Caco-2 (cell line): ENCODE measurements at regions of chrX and their contacts with region 1.

Region 1: DNA sequence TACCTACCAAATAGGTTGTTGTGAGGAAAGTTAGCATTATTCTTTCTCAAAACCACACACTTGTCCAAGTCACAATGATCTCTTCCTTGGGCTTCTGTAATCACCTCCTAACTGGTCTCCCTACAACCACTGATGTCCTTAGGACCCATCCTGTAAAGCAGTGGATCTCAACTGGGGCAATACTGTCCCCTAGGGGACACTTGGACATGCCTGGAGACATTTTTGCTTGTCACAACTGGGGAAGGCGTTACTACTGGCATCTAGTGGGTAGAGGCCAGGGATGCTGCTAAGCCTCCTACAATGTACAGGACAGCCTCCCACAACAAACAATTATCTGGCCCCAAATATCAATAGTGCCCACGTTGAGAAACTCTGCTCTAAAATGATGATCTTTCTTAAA is 118.7 kb upstream of the AP1S2 start:
- DNase-seq: peak; percentile 39
- H3K4me3 ChIP-seq: no peak overlapping the region
- H3K4me3 Mint-ChIP-seq: no peak overlapping the region
- H3K27ac Mint-ChIP-seq: no peak overlapping the region
- H3K4me1 ChIP-seq: no peaks in the 10 kb centered on the region
- H3K4me1 Mint-ChIP-seq: no peaks in the 10 kb centered on the region
- H3K27me3 ChIP-seq: no peaks in the 10 kb centered on the region
- H3K27me3 Mint-ChIP-seq: no peaks in the 10 kb centered on the region
- CTCF ChIP-seq: peak; percentile 26 to 53

Region 2: DNA sequence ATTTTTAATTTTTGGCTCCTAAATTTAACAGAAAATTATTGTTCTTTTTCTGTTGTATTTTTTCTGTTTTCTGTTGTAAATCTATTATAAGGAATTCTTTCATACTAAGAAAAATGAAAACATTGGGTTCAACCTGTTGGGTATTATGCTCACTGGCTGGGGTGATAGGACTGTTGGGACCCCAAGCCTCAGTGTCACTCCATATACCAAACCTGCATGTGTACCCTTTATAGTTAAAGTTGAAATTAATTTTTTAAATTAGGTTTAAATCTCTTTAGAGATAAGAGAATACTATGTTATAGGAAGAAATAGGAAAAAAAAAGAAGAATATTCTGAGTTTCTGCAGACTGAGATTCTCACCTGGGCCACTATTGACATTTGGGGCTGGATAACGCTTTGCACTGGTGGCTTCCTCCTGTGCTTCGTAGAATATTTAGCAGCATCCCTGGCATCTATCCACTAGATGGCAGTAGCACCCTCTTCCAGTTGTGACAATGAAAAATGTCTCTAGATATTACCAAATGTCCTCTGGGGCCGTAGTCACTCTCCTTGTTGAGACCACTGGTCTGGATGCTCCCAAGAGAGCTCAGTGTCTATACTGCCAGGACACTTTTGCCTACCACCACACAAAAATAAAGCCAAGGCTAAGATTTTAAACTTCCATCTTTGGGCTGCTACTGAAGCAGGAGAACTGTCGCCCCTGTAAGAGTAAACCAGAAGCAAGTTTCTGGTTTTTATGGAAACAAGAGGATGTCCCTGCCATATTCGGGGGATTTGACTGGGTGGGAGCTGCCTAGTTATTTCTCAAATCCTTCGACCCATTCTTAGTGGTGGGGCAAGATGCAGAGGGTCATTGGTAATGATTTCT is 286.2 kb before region 1 on chrX:
- CTCF ChIA-PET with region 1: no interaction called
- POLR2A ChIA-PET with region 1: no interaction called
- intact Hi-C with region 1: loop called (anchors 5 kb)
- DNase-seq: peak; percentile 47 to 54
- H3K4me3 ChIP-seq: no peak overlapping the region
- H3K4me3 Mint-ChIP-seq: no peak overlapping the region
- H3K27ac Mint-ChIP-seq: no peak overlapping the region
- H3K4me1 ChIP-seq: no peaks in the 10 kb centered on the region
- H3K4me1 Mint-ChIP-seq: no peaks in the 10 kb centered on the region
- H3K27me3 ChIP-seq: no peaks in the 10 kb centered on the region
- H3K27me3 Mint-ChIP-seq: no peaks in the 10 kb centered on the region
- CTCF ChIP-seq: peak; percentile 48 to 61

Region 3: DNA sequence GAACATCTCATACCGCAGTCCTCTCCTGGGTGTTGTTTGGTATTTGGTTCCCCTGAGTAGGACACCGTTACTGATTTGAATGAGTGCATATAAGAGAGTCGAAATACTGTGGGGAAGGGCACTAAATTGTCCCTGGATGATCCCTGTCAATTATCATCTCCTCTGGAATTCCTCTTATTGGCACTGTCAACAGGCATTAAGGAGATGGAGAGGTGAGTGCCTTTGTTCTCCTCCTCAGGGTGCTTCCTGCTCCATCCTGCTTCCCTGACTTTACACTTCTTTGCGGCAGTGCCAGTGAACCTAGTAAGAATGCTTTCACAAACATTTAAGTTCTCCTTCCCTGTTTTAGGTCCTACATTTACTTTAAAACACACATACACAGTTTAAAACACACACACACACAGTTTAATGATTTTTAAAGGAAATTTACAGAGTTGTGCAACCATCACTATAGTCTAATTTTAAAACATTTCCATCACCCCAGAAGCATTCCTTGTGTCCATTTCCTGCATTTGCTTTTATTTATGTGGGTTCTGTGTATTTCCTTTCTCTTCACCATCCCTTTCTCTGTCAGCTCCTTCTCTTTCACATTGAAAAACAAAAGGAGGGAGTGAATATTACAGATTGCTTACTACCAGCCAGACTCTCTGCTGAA is 203.9 kb before region 1 on chrX:
- CTCF ChIA-PET with region 1: no interaction called
- POLR2A ChIA-PET with region 1: no interaction called
- intact Hi-C with region 1: loop called (anchors 5 kb)
- DNase-seq: no peak
- H3K4me3 ChIP-seq: no peak overlapping the region
- H3K4me3 Mint-ChIP-seq: no peak overlapping the region
- H3K27ac Mint-ChIP-seq: no peak overlapping the region
- H3K4me1 ChIP-seq: no peaks in the 10 kb centered on the region
- H3K4me1 Mint-ChIP-seq: no peaks in the 10 kb centered on the region
- H3K27me3 ChIP-seq: no peaks in the 10 kb centered on the region
- H3K27me3 Mint-ChIP-seq: no peaks in the 10 kb centered on the region
- CTCF ChIP-seq: no peak

Region 4: DNA sequence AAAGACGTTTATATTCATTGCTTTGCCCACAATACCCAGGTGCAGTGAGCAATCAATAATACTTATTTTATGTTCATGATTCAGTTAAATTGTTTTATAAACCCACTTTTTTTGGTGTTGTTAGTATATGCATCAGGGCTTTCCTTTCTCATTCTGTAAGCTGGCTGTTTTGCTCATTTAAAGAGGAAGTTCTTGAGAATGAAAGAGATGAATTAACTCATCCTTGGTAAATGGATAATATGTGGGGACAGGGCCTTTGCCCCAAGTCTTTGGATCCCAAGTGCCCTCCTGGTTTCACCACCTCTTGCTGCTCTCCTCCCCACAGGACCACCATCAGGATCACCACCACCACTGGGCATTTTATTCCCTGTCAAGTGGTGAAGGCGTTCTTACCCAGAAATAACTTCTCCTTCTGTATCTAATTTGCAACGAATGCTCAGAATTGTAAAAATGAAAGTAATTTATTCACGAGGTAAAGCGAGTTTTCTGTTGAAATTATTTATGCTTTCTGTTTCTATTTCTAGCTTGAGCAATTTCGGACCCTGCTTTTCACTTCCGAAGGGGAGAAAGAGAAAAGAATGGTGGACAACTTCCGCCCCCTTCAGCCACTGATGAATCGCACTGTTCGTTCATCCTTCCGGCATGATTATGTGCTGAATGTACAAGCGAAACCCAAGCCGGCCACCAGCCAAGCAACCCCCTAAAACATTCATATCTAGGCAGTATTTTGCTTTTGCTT is 191.2 kb before region 1 on chrX:
- CTCF ChIA-PET with region 1: no interaction called
- POLR2A ChIA-PET with region 1: no interaction called
- intact Hi-C with region 1: no loop called
- DNase-seq: no peak
- H3K4me3 ChIP-seq: no peak overlapping the region
- H3K4me3 Mint-ChIP-seq: no peak overlapping the region
- H3K27ac Mint-ChIP-seq: no peak overlapping the region
- H3K4me1 ChIP-seq: no peaks in the 10 kb centered on the region
- H3K4me1 Mint-ChIP-seq: no peaks in the 10 kb centered on the region
- H3K27me3 ChIP-seq: no peaks in the 10 kb centered on the region
- H3K27me3 Mint-ChIP-seq: no peaks in the 10 kb centered on the region
- CTCF ChIP-seq: no peak

Region 5: GRCh38 chrX:15815779-15816437 is 157.4 kb before region 1 on chrX:
- CTCF ChIA-PET with region 1: no interaction called
- POLR2A ChIA-PET with region 1: no interaction called
- intact Hi-C with region 1: loop called (anchors 2 kb)
- DNase-seq: peak in 1 of 2 experiments; percentile 10
- H3K4me3 ChIP-seq: no peak overlapping the region
- H3K4me3 Mint-ChIP-seq: no peak overlapping the region
- H3K27ac Mint-ChIP-seq: no peak overlapping the region
- H3K4me1 ChIP-seq: no peaks in the 10 kb centered on the region
- H3K4me1 Mint-ChIP-seq: no peaks in the 10 kb centered on the region
- H3K27me3 ChIP-seq: no peaks in the 10 kb centered on the region
- H3K27me3 Mint-ChIP-seq: no peaks in the 10 kb centered on the region
- CTCF ChIP-seq: peak in 1 of 2 experiments; percentile 41

Region 6: GRCh38 chrX:15854712-15855567 is 118.4 kb before region 1 on chrX and contains the start of gene AP1S2:
- CTCF ChIA-PET with region 1: no interaction called
- POLR2A ChIA-PET with region 1: no interaction called
- intact Hi-C with region 1: loop called (anchors 2 kb)
- DNase-seq: peak; percentile 92 to 95
- H3K4me3 ChIP-seq: peak within 1 kb of the TSS; percentile 67
- H3K4me3 Mint-ChIP-seq: peak within 1 kb of the TSS; percentile 89
- H3K27ac Mint-ChIP-seq: peak within 1 kb of the TSS; percentile 82
- H3K4me1 ChIP-seq: no peaks in the 10 kb centered on the region
- H3K4me1 Mint-ChIP-seq: no peaks in the 10 kb centered on the region
- H3K27me3 ChIP-seq: no peaks in the 10 kb centered on the region
- H3K27me3 Mint-ChIP-seq: peaks cover 2% of the 10 kb centered on the region
- CTCF ChIP-seq: no peak
- total RNA-seq, gene AP1S2: 18.4 and 18.6 TPM in 2 replicates

Region 7: DNA sequence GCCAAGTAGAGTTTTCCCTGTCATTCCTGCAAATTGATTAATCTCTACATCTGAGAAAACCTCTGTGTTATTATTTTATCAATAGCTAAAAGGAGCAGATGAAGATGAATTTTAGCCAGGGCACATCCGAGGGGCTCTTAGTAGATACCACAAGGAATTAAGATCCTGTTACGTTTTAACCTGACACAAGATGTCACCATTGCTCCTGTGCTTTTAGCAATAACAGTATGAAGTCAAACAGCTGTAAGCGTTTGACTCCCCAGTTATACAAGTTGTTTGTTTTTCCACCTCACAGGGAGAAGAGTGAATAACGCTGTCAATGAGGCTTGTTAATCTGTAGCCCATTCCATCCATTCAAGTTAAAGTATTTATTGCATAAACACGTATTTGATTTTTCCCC is 42.7 kb before region 1 on chrX:
- CTCF ChIA-PET with region 1: no interaction called
- POLR2A ChIA-PET with region 1: no interaction called
- intact Hi-C with region 1: loop called (anchors 1 kb)
- DNase-seq: peak in 1 of 2 experiments; percentile 19
- H3K4me3 ChIP-seq: no peak overlapping the region
- H3K4me3 Mint-ChIP-seq: no peak overlapping the region
- H3K27ac Mint-ChIP-seq: no peak overlapping the region
- H3K4me1 ChIP-seq: peaks cover 9% of the 10 kb centered on the region; the same call in 1 of the 2 replicates
- H3K4me1 Mint-ChIP-seq: peaks cover 12% of the 10 kb centered on the region
- H3K27me3 ChIP-seq: no peaks in the 10 kb centered on the region
- H3K27me3 Mint-ChIP-seq: no peaks in the 10 kb centered on the region
- CTCF ChIP-seq: no peak